ENCODE measurements at regions of chr14 and their contacts with region 1.

Region 1: GRCh38 chr14:24241829-24242443 is 487 bp downstream of the TINF2 start:
- DNase-seq: peak; percentile 95
- ATAC-seq: peak; percentile 87
- H3K4me3 ChIP-seq: peak overlapping the region; percentile 76
- H3K27ac ChIP-seq: peak overlapping the region; percentile 92
- H3K4me1 ChIP-seq: peaks cover 42% of the 10 kb centered on the region
- H3K27me3 ChIP-seq: no peaks in the 10 kb centered on the region
- CTCF ChIP-seq: 0 out of 2 replicates have a peak, but pooled peaks have one; percentile 27

Region 2: DNA sequence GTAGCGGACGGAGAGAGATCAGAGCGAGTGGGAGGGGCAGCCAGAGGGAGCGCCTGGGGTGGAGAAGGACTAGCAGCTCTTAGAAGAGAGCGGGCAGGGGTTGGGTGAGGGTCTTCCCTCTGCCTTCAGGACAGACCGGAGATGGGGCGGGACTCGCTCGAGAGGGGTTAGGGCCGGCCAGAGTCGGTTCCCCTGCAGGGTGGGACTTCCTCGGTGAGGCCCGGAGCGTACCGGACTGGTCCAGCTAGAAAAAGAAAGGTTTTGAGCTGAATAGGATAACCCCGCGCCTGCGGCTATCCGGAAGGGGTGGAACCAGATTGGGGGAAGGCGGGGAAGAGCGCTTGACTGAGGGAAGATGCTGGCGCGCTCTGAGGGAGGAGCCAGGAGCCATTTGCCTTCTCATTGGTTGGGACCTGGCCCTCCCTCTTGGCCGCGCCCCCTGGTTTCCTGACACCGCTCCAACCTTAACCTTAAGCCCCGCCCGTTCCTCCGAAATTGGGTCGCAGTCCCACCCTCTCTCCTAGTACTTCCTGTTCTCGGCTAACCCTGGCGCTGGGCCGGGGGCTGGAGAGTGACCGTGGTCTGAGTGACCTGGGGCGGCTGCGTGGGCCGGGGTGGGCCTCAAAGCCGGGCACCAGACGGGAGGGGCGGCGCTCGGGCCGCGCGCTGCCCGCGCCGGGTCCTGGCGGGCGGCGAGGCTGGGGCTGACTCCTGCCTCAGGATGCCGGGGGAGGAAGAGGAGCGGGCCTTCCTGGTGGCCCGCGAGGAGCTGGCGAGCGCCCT is 94.8 kb before region 1 on chr14 and contains the start of gene RNF31:
- CTCF ChIA-PET with region 1: no interaction called
- POLR2A ChIA-PET with region 1: interaction called, 16 read pairs
- intact Hi-C with region 1: no loop called
- DNase-seq: peak; percentile 98
- ATAC-seq: peak; percentile 86
- H3K4me3 ChIP-seq: peak within 1 kb of the TSS; percentile 86
- H3K27ac ChIP-seq: peak within 1 kb of the TSS; percentile 48
- H3K4me1 ChIP-seq: peaks cover 18% of the 10 kb centered on the region
- H3K27me3 ChIP-seq: no peaks in the 10 kb centered on the region
- CTCF ChIP-seq: no peak
- total RNA-seq, gene RNF31: 69.6 and 79.4 TPM in 2 replicates

Region 3: GRCh38 chr14:24195191-24196070 is 46.5 kb before region 1 on chr14 and contains the start of gene TM9SF1:
- CTCF ChIA-PET with region 1: interaction called, 5 read pairs
- POLR2A ChIA-PET with region 1: no interaction called
- intact Hi-C with region 1: loop called (anchors 1 kb)
- DNase-seq: peak; percentile 78
- ATAC-seq: peak; percentile 94
- H3K4me3 ChIP-seq: peak within 1 kb of the TSS; percentile 86
- H3K27ac ChIP-seq: peak within 1 kb of the TSS; percentile 89
- H3K4me1 ChIP-seq: peaks cover 9% of the 10 kb centered on the region
- H3K27me3 ChIP-seq: no peaks in the 10 kb centered on the region
- CTCF ChIP-seq: no peak
- total RNA-seq, gene TM9SF1: 52.1 and 58.3 TPM in 2 replicates

Region 4: GRCh38 chr14:24271134-24271833 is 29.3 kb after region 1 on chr14 and contains the start of gene RABGGTA:
- CTCF ChIA-PET with region 1: interaction called, 9 read pairs
- POLR2A ChIA-PET with region 1: interaction called, 6 read pairs
- intact Hi-C with region 1: loop called (anchors 2 kb)
- DNase-seq: peak; percentile 91
- ATAC-seq: peak; percentile 97
- H3K4me3 ChIP-seq: peak within 1 kb of the TSS; percentile 99
- H3K27ac ChIP-seq: peak within 1 kb of the TSS; percentile 76
- H3K4me1 ChIP-seq: peaks cover 21% of the 10 kb centered on the region
- H3K27me3 ChIP-seq: no peaks in the 10 kb centered on the region
- CTCF ChIP-seq: peak; percentile 77
- total RNA-seq, gene RABGGTA: 39.2 and 51.5 TPM in 2 replicates

Region 5: DNA sequence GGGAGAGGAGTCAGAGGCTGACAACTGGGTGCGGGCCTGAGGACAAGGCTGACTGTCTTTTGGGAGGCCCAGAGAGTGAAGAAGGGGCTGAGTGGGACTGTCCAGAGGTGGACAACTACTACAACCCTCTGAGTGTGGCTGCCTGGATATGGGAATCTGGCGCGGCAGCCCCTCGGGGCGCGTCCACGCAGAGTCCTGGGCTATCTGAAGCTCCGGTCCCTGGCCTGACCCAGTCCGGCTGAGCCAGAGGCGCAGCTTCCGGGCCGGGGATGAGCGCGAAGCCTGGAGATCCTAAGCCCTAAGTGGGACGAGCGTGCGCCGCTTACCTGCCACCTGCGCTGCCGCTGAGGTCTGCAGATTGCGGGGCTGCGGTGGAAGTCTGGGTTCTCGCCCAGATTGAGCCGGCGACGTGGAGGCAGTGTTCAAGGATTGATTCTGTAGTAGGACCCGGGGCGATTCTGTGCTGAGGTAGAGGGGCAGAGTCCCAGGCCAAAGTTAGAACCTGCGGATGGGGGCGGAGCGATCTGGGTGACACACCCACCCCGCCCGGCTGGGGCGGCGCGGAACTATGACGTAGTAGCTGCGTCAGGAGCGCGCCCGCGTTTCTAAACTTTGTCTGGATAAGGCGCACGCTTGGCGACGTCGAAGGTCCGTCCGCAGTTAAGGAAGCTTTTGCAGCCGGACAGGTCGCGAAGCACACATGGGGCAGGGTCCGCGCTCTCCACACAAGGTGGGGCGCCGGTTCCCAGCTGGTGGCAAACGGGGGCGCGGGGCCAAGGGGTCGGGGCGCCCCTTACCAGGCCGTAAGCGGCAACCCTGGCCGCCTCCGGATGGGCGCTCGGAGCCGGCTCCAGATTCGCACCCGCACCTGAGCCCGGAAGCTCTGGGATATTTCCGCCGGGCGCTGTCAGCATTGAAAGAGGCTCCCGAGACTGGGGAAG is 57.6 kb after region 1 on chr14 and contains the starts of genes DHRS1 and NOP9:
- CTCF ChIA-PET with region 1: interaction called, 55 read pairs
- POLR2A ChIA-PET with region 1: interaction called, 7 read pairs
- intact Hi-C with region 1: loop called (anchors 1 kb)
- DNase-seq: peak; percentile 95
- ATAC-seq: peak; percentile 65
- H3K4me3 ChIP-seq: peak within 1 kb of the TSS; percentile 93
- H3K27ac ChIP-seq: peak within 1 kb of the TSS; percentile 71
- H3K4me1 ChIP-seq: peaks cover 36% of the 10 kb centered on the region
- H3K27me3 ChIP-seq: no peaks in the 10 kb centered on the region
- CTCF ChIP-seq: no peak
- total RNA-seq, gene DHRS1: 15.8 and 15.9 TPM in 2 replicates
- total RNA-seq, gene NOP9: 30.4 and 35.5 TPM in 2 replicates

Region 6: DNA sequence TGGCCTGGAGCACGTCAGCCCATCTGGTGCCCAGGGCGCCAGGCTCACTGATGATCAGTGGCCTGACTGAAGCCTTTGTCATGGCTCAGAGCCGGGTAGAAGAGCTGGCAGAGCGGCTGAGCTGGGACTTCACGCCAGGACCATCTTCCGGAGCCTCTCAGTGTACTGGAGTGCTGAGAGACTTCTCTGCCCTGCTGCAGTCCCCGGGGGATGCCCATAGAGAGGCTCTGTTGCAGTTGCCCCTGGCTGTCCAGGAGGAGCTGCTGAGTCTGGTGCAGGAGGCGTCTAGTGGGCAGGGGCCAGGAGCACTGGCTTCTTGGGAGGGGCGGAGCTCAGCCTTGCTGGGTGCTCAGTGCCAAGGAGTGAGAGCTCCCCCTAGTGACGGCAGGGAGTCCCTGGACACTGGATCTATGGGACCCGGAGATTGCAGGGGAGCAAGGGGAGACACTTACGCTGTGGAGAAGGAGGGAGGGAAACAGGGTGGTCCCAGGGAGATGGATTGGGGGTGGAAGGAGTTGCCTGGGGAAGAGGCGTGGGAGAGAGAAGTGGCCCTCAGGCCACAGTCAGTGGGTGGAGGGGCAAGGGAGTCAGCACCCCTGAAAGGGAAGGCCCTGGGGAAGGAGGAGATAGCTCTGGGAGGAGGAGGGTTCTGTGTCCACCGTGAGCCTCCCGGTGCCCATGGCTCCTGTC is 189.8 kb after region 1 on chr14:
- CTCF ChIA-PET with region 1: interaction called, 3 read pairs
- POLR2A ChIA-PET with region 1: no interaction called
- intact Hi-C with region 1: loop called (anchors 2 kb)
- DNase-seq: peak; percentile 93
- ATAC-seq: peak; percentile 54
- H3K4me3 ChIP-seq: peak overlapping the region; percentile 98
- H3K27ac ChIP-seq: peak overlapping the region; percentile 85
- H3K4me1 ChIP-seq: peaks cover 47% of the 10 kb centered on the region
- H3K27me3 ChIP-seq: no peaks in the 10 kb centered on the region
- CTCF ChIP-seq: peak; percentile 98